SK-N-SH (cell line): ENCODE measurements at regions of chr2 and their contacts with region 1.

Region 1: DNA sequence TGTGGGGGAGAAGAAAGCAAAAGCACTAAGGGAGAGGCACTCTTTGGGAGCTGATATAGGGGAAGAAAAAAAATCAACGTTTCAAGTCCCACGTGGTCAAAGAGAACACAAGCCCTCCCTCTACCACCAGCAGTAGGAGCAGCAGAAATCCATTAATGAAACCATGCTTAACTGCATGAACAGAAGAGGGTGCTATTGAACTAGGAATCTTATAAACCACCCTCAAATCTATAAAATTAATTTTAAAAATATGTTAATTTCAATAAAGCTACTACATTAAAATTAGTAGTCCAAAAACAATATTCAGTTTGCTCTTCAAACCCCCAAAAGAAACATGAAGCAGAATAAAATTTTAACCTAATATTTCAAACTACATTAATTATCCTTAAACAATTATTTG is 147.8 kb downstream of the TMEM18 start:
- DNase-seq: peak; percentile 85
- H3K4me3 ChIP-seq: no peak overlapping the region
- H3K27ac ChIP-seq: peak overlapping the region in 1 of 2 experiments; percentile 51; a peak in 1 of 4 replicates
- H3K4me1 ChIP-seq: no peaks in the 10 kb centered on the region; a peak in 1 of 4 replicates
- H3K27me3 ChIP-seq: no peaks in the 10 kb centered on the region
- CTCF ChIP-seq: peak; percentile 11
- EP300 ChIP-seq: no peak
- RAD21 ChIP-seq: peak; percentile 93

Region 2: DNA sequence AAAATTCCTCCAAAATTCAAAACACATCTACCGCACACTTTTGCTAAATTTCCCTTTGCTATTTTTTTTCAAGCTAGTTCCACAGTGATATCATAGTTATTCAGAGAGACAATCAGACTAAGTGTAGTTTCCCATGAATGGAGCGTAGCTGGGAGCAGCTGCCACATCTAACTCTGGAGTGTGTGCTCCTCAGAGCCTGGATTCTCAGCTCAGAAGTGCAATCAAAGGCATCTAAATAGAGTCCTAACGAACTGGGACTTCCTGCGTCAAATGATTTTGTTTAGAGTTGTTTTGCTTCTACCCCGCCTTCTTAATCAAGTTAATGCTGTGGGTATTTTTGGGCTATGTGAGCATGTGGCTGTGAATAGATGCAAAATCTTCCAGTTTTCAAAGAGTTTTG is 12.5 kb before region 1 on chr2:
- CTCF ChIA-PET with region 1: interaction called, 20 read pairs
- POLR2A ChIA-PET with region 1: no interaction called
- DNase-seq: no peak
- H3K4me3 ChIP-seq: no peak overlapping the region
- H3K27ac ChIP-seq: no peak overlapping the region
- H3K4me1 ChIP-seq: no peaks in the 10 kb centered on the region
- H3K27me3 ChIP-seq: no peaks in the 10 kb centered on the region
- CTCF ChIP-seq: no peak
- EP300 ChIP-seq: no peak
- RAD21 ChIP-seq: no peak

Region 3: GRCh38 chr2:567850-568638 is 38.6 kb after region 1 on chr2:
- CTCF ChIA-PET with region 1: interaction called, 13 read pairs
- POLR2A ChIA-PET with region 1: no interaction called
- DNase-seq: no peak
- H3K4me3 ChIP-seq: no peak overlapping the region
- H3K27ac ChIP-seq: peak overlapping the region in 1 of 2 experiments; percentile 100; a peak in 2 of 4 replicates
- H3K4me1 ChIP-seq: peaks cover 0 to 41% of the 10 kb centered on the region in 2 experiments; a peak in 2 of 4 replicates
- H3K27me3 ChIP-seq: no peaks in the 10 kb centered on the region
- CTCF ChIP-seq: no peak
- EP300 ChIP-seq: no peak
- RAD21 ChIP-seq: no peak

Region 4: GRCh38 chr2:626491-627339 is 97.3 kb after region 1 on chr2:
- CTCF ChIA-PET with region 1: interaction called, 25 read pairs
- POLR2A ChIA-PET with region 1: no interaction called
- DNase-seq: peak; percentile 64
- H3K4me3 ChIP-seq: no peak overlapping the region
- H3K27ac ChIP-seq: peak overlapping the region in 1 of 2 experiments; percentile 96; a peak in 2 of 4 replicates
- H3K4me1 ChIP-seq: peaks cover 0 to 48% of the 10 kb centered on the region in 2 experiments; a peak in 2 of 4 replicates
- H3K27me3 ChIP-seq: no peaks in the 10 kb centered on the region
- CTCF ChIP-seq: no peak
- EP300 ChIP-seq: peak in 1 of 2 experiments; percentile 83; a peak in 1 of 4 replicates
- RAD21 ChIP-seq: peak; percentile 37; the same call in 1 of the 2 replicates

Region 5: GRCh38 chr2:641873-642815 is 112.7 kb after region 1 on chr2:
- CTCF ChIA-PET with region 1: interaction called, 124 read pairs
- POLR2A ChIA-PET with region 1: no interaction called
- DNase-seq: no peak
- H3K4me3 ChIP-seq: no peak overlapping the region
- H3K27ac ChIP-seq: no peak overlapping the region
- H3K4me1 ChIP-seq: no peaks in the 10 kb centered on the region; a peak in 1 of 4 replicates
- H3K27me3 ChIP-seq: no peaks in the 10 kb centered on the region
- CTCF ChIP-seq: no peak
- EP300 ChIP-seq: no peak
- RAD21 ChIP-seq: no peak

Region 6: DNA sequence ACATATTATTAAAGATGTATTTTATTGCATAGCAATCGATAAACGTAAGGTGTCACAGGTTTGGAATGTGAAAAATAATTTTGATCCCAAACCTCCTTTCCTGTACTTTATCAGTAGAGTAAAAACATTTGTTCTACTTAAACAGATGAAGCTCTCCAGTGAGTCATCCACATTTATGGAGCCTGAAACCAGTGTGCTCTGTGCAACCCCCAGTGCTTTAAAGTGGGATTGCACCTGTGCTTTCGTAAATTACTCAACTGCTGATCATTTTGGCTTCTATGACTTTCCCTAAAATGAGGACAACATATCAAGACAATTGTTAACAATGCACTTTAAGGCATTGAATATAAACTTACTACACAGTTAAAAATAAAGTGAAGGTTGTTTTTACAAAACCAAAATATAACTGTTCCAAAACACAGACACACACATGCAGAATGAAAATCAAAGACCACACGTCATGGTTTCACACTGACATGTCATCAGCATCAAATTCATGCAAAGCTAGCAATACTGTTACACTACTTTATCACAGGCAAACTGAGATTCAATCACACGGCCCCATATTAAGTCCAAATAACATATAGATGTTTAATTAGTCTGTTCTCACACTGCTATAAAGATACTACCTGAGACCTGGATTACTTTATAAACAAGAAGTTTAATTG is 138.0 kb after region 1 on chr2:
- CTCF ChIA-PET with region 1: interaction called, 21 read pairs
- POLR2A ChIA-PET with region 1: no interaction called
- DNase-seq: peak; percentile 76
- H3K4me3 ChIP-seq: no peak overlapping the region
- H3K27ac ChIP-seq: no peak overlapping the region
- H3K4me1 ChIP-seq: no peaks in the 10 kb centered on the region
- H3K27me3 ChIP-seq: no peaks in the 10 kb centered on the region
- CTCF ChIP-seq: peak; percentile 74
- EP300 ChIP-seq: no peak
- RAD21 ChIP-seq: peak; percentile 72